PC-9 (cell line): ENCODE measurements at regions of chr3 and their contacts with region 1.

Region 1: DNA sequence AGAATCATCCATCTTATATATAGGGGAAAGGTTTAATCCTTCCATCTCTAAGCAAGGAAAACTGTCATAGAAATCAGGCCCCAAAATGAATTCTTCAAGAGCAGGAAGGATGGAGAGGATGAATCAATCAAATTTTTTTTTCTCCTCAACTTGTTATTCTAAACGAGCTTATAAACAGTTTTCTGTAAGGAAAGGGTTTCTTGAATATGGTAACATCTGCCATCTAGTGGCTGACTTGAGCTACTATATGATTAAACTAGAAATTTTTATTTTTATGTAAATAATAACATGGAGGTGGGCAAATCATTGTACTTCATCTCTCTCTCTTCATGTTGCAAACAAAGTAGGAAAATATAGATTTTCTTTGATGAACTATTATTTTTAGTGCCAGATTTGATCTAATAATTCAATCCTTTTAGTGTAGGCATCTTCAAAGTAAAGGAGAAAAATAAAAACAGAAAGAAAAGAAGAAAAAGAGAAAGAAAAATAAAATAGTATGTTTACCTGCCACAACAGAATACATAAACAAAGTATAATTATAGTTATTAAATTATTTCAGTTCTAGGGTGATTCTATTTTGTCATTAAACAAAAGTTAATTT is 146.6 kb downstream of the SERPINI1 start:
- DNase-seq: peak in 1 of 2 experiments; percentile 37
- H3K4me3 ChIP-seq: no peak overlapping the region
- H3K27ac ChIP-seq: no peak overlapping the region
- H3K4me1 ChIP-seq: peaks cover 12% of the 10 kb centered on the region; the same call in 1 of the 2 replicates
- H3K27me3 ChIP-seq: no peaks in the 10 kb centered on the region
- CTCF ChIP-seq: peak; percentile 81

Region 2: GRCh38 chr3:167380004-167380689 is 502.0 kb before region 1 on chr3 and contains the start of gene ZBBX:
- CTCF ChIA-PET with region 1: interaction called, 8 read pairs
- POLR2A ChIA-PET with region 1: no interaction called
- intact Hi-C with region 1: loop called (anchors 1 kb)
- DNase-seq: peak; percentile 70 to 88
- H3K4me3 ChIP-seq: no peak within 1 kb of the TSS
- H3K27ac ChIP-seq: no peak within 1 kb of the TSS
- H3K4me1 ChIP-seq: no peaks in the 10 kb centered on the region
- H3K27me3 ChIP-seq: no peaks in the 10 kb centered on the region
- CTCF ChIP-seq: peak; percentile 88
- total RNA-seq, gene ZBBX: 0.38 and 0.85 TPM in 2 replicates

Region 3: GRCh38 chr3:167559924-167560323 is 322.2 kb before region 1 on chr3:
- CTCF ChIA-PET with region 1: no interaction called
- POLR2A ChIA-PET with region 1: no interaction called
- intact Hi-C with region 1: no loop called
- DNase-seq: no peak
- H3K4me3 ChIP-seq: no peak overlapping the region
- H3K27ac ChIP-seq: no peak overlapping the region
- H3K4me1 ChIP-seq: no peaks in the 10 kb centered on the region
- H3K27me3 ChIP-seq: no peaks in the 10 kb centered on the region
- CTCF ChIP-seq: no peak

Region 4: DNA sequence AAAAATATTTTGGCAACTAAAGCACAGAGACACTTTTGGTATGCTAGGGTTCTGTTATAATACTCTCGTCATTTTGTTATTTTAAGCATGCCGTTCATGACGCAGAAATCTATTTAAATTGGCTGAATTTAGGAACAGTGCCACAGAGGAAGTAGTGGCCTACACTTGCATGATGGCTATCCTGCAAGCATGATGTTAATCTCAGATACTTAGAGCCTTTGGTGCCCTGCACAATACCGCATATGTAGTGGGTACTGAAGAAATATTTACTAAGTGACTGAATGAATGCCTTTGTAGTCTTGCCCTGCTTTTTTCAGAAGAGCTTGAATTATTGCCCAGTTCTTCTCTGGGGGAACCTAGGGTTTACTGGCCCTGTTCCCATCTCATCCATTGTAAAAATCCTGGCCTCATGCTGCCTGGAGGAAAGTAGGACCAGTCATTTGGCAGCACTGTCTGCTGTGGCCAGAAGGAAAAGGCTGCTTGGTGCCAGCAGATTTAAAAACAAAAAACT is 67.7 kb before region 1 on chr3:
- CTCF ChIA-PET with region 1: no interaction called
- POLR2A ChIA-PET with region 1: no interaction called
- intact Hi-C with region 1: no loop called
- DNase-seq: no peak
- H3K4me3 ChIP-seq: no peak overlapping the region
- H3K27ac ChIP-seq: no peak overlapping the region
- H3K4me1 ChIP-seq: no peaks in the 10 kb centered on the region
- H3K27me3 ChIP-seq: no peaks in the 10 kb centered on the region
- CTCF ChIP-seq: no peak

Region 5: DNA sequence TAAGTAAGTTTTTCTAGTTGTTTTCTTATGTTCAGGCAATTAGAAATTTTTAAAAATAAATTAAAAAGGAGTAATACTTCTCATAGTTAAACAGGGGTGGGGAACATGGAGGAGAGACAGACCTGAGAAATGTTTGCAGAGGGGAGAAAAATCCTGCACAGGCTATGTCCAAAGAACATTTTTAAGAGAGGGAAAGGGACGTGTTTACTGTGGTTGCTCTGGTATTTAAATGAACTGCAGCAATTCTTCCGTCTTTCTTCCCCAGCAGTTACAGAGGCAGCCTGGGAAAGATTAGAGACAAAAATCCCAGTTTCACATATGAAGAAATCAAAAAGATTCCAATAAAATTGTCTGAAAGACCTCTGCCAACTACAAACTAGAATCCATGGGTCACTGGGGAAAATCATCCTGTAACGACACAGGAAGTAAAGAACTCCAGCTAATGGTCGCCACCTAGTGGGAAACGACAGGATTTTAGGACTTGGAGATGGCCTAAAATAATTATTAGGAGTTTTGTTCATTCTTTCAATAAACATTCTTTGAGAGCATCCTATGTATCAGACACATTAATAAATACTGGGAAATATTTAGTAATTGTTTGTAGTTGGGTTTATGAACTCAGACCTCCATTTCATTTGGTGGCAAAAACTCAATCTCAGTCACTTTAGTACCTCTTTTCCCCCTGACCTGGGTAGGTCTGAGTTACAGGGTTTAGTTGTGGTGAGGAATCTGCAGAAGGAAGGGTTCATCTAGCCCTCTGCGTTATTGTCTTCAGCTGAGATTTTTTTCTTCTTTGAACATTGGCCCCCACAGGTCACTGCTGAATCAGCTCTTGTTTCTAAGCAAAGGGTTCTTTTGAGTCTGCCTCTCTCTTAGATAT is 283.5 kb after region 1 on chr3:
- CTCF ChIA-PET with region 1: no interaction called
- POLR2A ChIA-PET with region 1: no interaction called
- intact Hi-C with region 1: loop called (anchors 1 kb)
- DNase-seq: peak; percentile 36 to 46
- H3K4me3 ChIP-seq: no peak overlapping the region
- H3K27ac ChIP-seq: no peak overlapping the region
- H3K4me1 ChIP-seq: no peaks in the 10 kb centered on the region
- H3K27me3 ChIP-seq: no peaks in the 10 kb centered on the region
- CTCF ChIP-seq: peak; percentile 87